ENCODE measurements at regions of chr17 and their contacts with region 1.

Region 1: DNA sequence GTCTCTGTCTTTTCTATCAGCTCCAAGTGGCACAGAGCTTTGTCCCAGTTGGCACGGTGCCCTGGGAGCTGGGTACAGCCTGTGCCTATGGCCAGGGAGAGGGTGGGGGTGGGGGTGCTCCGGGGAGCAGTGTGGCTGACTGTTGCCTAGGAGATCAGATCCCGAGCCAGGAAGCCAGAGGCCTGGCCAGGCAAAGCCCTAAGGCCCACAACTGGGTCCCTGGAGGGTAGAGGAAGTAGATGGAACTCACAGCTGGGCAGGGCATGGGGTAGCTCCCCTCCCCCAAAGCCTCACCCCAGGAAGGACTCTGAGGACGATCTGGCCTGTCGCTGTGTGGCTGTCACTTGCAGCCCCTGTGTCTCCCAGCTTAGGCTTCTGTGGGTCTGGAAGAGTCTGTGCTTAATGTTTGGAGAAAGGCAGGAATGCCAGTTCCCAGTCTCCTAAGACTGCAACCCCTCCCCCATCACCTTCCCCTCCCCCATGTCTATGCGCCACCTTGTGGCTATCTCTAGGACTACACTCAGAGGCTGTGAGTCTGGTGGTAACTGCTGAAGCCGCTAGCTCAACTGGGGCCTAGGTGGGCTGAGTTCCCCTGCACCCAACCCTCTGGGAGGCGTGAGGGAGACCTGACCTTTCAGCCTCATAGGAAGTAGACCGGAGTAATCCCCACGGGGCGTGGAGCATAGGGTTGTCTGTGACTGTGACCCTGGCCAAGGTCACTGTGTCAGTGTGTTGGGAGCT is 12.6 kb downstream of the THRA start:
- DNase-seq: peak; percentile 58 to 82 (median 66)
- ATAC-seq: peak; percentile 91
- H3K4me3 ChIP-seq: no peak overlapping the region
- H3K4me3 Mint-ChIP-seq: no peak overlapping the region
- H3K27ac ChIP-seq: no peak overlapping the region
- H3K27ac Mint-ChIP-seq: peak overlapping the region; percentile 10
- H3K4me1 ChIP-seq: peaks cover 47% of the 10 kb centered on the region
- H3K4me1 Mint-ChIP-seq: peaks cover 50% of the 10 kb centered on the region
- H3K27me3 ChIP-seq: no peaks in the 10 kb centered on the region
- H3K27me3 Mint-ChIP-seq: no peaks in the 10 kb centered on the region
- CTCF ChIP-seq: peak; percentile 89

Region 2: GRCh38 chr17:40098846-40099618 is 23.7 kb after region 1 on chr17:
- CTCF ChIA-PET with region 1: interaction called, 19 read pairs
- POLR2A ChIA-PET with region 1: interaction called, 46 read pairs
- intact Hi-C with region 1: no loop called
- DNase-seq: peak; percentile 99 to 100 (median 99)
- ATAC-seq: peak; percentile 63
- H3K4me3 ChIP-seq: peak overlapping the region; percentile 85
- H3K4me3 Mint-ChIP-seq: peak overlapping the region; percentile 97
- H3K27ac ChIP-seq: peak overlapping the region; percentile 94 to 96
- H3K27ac Mint-ChIP-seq: peak overlapping the region; percentile 91
- H3K4me1 ChIP-seq: peaks cover 97% of the 10 kb centered on the region
- H3K4me1 Mint-ChIP-seq: peaks cover 90% of the 10 kb centered on the region
- H3K27me3 ChIP-seq: no peaks in the 10 kb centered on the region
- H3K27me3 Mint-ChIP-seq: no peaks in the 10 kb centered on the region
- CTCF ChIP-seq: no peak

Region 3: GRCh38 chr17:40107522-40108174 is 32.3 kb after region 1 on chr17:
- CTCF ChIA-PET with region 1: interaction called, 49 read pairs
- POLR2A ChIA-PET with region 1: interaction called, 18 read pairs
- intact Hi-C with region 1: loop called in 1 of 2 experiments (anchors 1 kb)
- DNase-seq: peak in 3 of 14 experiments; percentile 38 to 70 (median 70)
- ATAC-seq: peak; percentile 5
- H3K4me3 ChIP-seq: peak overlapping the region; percentile 16
- H3K4me3 Mint-ChIP-seq: peak overlapping the region; percentile 82
- H3K27ac ChIP-seq: peak overlapping the region; percentile 94 to 95
- H3K27ac Mint-ChIP-seq: peak overlapping the region; percentile 99
- H3K4me1 ChIP-seq: peaks cover 100% of the 10 kb centered on the region
- H3K4me1 Mint-ChIP-seq: peaks cover 98% of the 10 kb centered on the region
- H3K27me3 ChIP-seq: no peaks in the 10 kb centered on the region
- H3K27me3 Mint-ChIP-seq: no peaks in the 10 kb centered on the region
- CTCF ChIP-seq: no peak

Region 4: DNA sequence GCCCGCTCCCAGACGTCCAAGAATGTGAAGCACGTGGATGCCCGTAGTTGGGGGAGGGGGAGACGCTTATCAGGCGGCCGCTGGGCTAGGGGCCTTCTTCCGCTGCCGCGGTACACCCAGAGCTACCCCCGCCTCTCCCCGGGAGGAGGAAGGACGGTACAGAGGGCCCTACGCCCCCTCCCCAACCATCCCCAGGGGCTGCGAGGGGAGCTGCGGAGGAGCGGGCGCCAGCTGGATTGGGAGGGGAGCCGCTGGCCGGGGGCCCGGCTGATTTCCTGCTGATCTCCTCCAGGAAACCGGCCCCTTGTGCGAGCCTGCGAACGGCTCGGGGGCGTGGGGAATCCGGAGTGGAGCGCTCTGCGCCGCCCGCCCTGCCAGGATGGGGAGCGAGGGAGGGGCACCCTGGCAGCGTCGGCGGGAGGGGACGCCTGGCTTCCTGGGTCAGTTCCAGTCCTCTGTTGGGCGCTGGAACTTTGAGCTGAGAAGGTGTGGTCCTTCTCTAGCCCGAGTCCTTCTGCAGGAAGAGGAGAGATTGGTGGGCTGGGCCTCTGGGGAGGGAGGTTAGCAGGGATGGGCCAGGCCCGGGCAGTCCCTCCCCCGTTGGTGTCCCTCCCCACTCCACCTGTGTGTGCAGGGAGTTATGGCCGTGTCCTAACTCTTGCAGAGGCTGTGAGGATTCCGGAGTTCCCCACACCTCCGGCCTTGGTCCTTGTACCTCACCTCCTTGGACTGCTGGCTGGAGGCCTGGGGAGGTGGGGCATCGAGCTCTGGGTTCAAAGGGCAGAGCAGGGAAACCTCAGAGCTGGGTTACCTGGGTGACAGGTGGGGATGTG is 270.0 kb after region 1 on chr17:
- CTCF ChIA-PET with region 1: no interaction called
- POLR2A ChIA-PET with region 1: no interaction called
- intact Hi-C with region 1: no loop called
- DNase-seq: peak in 6 of 14 experiments; percentile 30 to 67 (median 54)
- ATAC-seq: peak; percentile 13
- H3K4me3 ChIP-seq: peak overlapping the region; percentile 60
- H3K4me3 Mint-ChIP-seq: peak overlapping the region; percentile 83
- H3K27ac ChIP-seq: peak overlapping the region; percentile 27 to 70
- H3K27ac Mint-ChIP-seq: peak overlapping the region; percentile 93
- H3K4me1 ChIP-seq: peaks cover 93% of the 10 kb centered on the region
- H3K4me1 Mint-ChIP-seq: peaks cover 83% of the 10 kb centered on the region
- H3K27me3 ChIP-seq: no peaks in the 10 kb centered on the region
- H3K27me3 Mint-ChIP-seq: no peaks in the 10 kb centered on the region
- CTCF ChIP-seq: no peak